GM12878 (cell line): ENCODE measurements at regions of chr17 and their contacts with region 1.

Region 1: GRCh38 chr17:11719856-11720255 is 121.6 kb downstream of the DNAH9 start:
- DNase-seq: no peak
- ATAC-seq: no peak
- H3K4me3 ChIP-seq: no peak overlapping the region
- H3K27ac ChIP-seq: no peak overlapping the region
- H3K4me1 ChIP-seq: no peaks in the 10 kb centered on the region
- H3K27me3 ChIP-seq: no peaks in the 10 kb centered on the region
- CTCF ChIP-seq: no peak
- EP300 ChIP-seq: no peak
- POLR2A ChIP-seq: no peak
- RAD21 ChIP-seq: no peak

Region 2: DNA sequence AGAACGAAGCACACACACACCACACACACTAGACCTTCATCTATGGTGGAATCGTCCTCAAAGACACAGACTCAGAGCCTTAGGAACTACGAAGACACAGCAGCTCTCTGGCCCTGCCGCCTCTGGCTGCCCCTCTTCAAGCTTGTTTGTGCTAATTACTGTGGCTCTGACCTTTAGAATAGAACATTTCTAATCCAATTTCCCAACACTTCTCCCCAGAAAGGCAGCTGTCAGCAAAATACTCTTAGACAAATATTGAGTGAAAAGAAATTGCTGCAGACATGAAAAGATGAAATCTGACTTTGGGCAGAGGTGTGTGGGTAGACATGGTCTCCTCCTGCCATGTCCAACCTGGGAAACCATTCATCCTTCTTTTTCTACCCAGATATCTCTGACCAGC is 273.5 kb before region 1 on chr17:
- CTCF ChIA-PET with region 1: no interaction called
- POLR2A ChIA-PET with region 1: no interaction called
- RAD21 ChIA-PET with region 1: no interaction called
- SMC1A ChIA-PET with region 1: no interaction called
- in situ Hi-C with region 1: loop called (anchors 10 kb)
- intact Hi-C with region 1: no loop called
- DNase-seq: no peak
- ATAC-seq: no peak
- H3K4me3 ChIP-seq: no peak overlapping the region
- H3K27ac ChIP-seq: no peak overlapping the region
- H3K4me1 ChIP-seq: no peaks in the 10 kb centered on the region
- H3K27me3 ChIP-seq: no peaks in the 10 kb centered on the region
- CTCF ChIP-seq: no peak
- EP300 ChIP-seq: no peak
- POLR2A ChIP-seq: no peak
- RAD21 ChIP-seq: no peak

Region 3: DNA sequence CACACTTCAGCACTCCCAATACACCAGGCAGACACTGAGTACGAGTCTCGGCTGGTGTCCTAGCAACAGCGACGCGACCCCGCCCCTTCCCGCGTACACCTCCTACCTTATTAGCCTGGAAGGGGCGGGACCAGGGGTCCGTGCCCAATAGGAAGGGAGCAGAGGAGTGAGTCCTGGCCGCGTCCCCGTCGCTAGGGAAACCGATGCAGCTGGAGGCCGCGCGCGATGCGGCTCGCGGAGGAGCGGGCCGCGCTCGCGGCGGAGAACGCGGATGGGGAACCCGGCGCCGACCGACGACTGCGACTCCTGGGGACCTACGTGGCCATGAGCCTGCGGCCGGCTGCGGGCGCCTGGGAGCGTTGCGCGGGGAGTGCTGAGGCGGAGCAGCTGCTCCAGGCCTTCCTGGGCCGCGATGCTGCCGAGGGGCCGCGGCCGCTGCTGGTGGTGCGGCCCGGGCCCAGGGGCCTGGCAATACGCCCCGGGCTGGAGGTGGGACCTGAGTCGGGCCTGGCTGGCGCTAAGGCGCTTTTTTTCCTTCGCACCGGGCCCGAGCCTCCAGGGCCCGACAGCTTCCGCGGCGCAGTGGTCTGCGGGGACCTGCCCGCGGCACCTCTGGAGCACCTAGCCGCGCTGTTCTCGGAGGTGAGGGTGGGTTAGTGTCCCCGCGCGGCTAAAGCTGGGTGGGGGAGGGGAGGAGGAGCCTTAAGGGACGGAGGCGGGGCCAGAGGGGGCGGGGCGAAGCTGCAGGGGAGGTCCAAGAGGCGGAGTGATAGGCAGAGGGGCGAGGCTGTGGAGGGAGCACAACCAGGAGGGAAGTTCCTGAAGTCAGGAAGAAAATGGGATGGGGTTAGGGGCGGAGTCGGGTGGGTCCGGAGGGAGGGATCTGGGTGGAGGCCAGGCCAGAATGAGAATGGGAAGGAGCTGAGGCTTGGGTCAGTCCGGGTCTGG is 121.3 kb before region 1 on chr17 and contains the start of gene DNAH9:
- CTCF ChIA-PET with region 1: no interaction called
- POLR2A ChIA-PET with region 1: no interaction called
- RAD21 ChIA-PET with region 1: no interaction called
- SMC1A ChIA-PET with region 1: no interaction called
- in situ Hi-C with region 1: no loop called
- intact Hi-C with region 1: no loop called
- DNase-seq: no peak
- ATAC-seq: no peak
- H3K4me3 ChIP-seq: no peak within 1 kb of the TSS
- H3K27ac ChIP-seq: no peak within 1 kb of the TSS
- H3K4me1 ChIP-seq: no peaks in the 10 kb centered on the region
- H3K27me3 ChIP-seq: no peaks in the 10 kb centered on the region
- CTCF ChIP-seq: no peak
- EP300 ChIP-seq: no peak
- POLR2A ChIP-seq: no peak
- RAD21 ChIP-seq: no peak
- polyA plus RNA-seq, gene DNAH9: not detected

Region 4: DNA sequence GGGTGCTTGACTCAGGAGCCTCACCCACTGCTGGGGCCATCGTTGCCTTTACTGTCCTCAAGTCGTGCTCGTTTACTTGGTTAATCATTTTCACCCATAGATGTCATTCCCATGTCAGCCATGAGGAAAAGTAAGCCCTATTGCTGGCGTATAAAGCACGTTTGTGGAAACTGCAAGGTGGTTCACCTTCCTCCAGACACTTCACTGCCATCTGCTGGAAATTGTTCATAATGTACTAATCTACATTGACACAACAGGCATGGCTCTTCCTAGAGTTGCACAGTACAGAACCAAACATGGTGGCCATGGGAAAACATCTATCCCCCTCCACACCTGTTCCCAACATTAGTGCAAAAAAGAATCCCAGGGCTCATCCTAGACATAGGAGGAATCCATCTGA is 160.9 kb after region 1 on chr17:
- CTCF ChIA-PET with region 1: no interaction called
- POLR2A ChIA-PET with region 1: no interaction called
- RAD21 ChIA-PET with region 1: no interaction called
- SMC1A ChIA-PET with region 1: no interaction called
- in situ Hi-C with region 1: loop called (anchors 10 kb)
- intact Hi-C with region 1: no loop called
- DNase-seq: no peak
- ATAC-seq: no peak
- H3K4me3 ChIP-seq: no peak overlapping the region
- H3K27ac ChIP-seq: no peak overlapping the region
- H3K4me1 ChIP-seq: no peaks in the 10 kb centered on the region
- H3K27me3 ChIP-seq: no peaks in the 10 kb centered on the region
- CTCF ChIP-seq: no peak; a peak in 1 of 6 replicates
- EP300 ChIP-seq: no peak
- POLR2A ChIP-seq: no peak
- RAD21 ChIP-seq: no peak